ENCODE measurements at regions of chr1 and their contacts with region 1.

Region 1: GRCh38 chr1:225809842-225810578 is at the start of gene EPHX1:
- DNase-seq: peak; percentile 95
- ATAC-seq: peak; percentile 85
- total RNA-seq, gene EPHX1: 68.6 TPM

Region 2: GRCh38 chr1:225482421-225482950 is 327.5 kb before region 1 on chr1:
- intact Hi-C with region 1: no loop called
- DNase-seq: no peak
- ATAC-seq: no peak

Region 3: GRCh38 chr1:225754940-225755641 is 54.9 kb before region 1 on chr1:
- intact Hi-C with region 1: no loop called
- DNase-seq: peak; percentile 58
- ATAC-seq: peak; percentile 67

Region 4: DNA sequence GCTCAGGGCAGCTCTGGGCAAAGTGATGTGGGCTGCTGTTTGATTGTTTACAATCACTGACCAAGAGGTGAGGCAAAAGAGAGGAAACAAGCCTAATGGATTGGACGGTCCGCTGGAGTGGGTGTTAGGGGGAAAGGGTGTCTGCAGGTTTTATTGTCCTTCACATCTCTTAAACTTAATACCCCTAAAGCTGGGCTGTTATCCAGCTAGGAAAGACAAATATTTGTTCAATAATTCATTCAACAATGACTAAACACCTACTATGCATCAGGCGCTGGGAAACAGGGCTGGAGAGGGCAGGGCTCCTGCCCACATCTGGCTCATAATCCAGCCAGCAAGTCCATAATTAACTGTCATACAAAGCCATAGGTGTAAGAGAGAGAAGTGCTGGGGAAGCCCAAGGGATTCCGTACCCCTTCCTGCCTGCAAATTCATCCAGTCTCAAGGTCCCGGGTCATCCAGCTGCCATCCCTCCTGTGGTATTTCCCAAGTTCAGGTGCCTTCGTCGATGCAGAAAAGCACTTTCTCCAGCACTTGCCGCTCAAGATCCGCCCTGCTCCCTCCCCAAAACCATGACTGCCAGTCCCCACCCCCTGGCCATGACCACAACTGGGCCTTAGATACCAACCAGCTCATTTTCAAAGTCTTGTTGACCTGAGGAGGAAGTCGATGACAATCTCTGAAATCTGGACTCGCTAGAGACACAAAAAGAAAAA is 61.5 kb after region 1 on chr1:
- intact Hi-C with region 1: no loop called
- DNase-seq: no peak
- ATAC-seq: no peak

Region 5: DNA sequence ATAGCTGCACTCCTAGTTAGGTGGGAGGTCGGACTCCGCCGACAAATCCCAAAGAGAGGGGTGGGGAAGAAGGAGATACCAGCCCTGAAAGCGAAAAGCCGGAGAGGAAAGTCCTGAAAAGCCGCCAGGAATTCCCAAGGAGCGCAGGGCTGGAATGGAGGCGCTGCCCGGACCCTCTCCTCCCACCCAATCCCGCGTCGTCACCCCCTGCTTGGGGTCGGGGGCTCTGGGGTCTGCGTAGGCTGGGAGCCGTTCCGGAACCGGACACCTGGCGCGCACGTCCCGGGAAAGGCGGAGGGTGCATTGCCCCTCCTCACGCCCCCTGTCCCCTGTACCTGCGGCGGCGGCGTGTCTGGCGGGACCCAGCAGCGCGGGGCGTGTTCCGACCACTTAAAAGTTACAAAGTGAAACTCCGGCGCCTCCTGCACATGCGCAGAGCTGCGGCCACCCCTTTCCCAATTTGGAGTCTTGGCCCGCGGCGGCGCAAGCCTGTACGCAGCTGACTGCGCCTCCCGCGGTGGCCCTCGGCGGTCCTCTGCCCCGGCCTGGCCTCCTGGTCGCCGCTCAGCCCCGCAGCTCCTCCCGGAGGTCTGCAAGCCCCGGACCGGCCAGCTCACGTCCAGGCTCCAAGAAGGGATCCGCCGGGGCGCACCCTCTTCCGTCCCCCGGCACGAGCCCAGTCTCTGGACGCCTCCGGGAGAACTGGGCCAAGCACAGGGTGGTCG is 72.1 kb after region 1 on chr1 and contains the start of gene TMEM63A:
- intact Hi-C with region 1: loop called (anchors 2 kb)
- DNase-seq: peak; percentile 98
- ATAC-seq: peak; percentile 93
- total RNA-seq, gene TMEM63A: 37.0 TPM

Measured in Right ventricle myocardium superior (tissue), 1 donor.